ENCODE measurements at regions of chr12 and their contacts with region 1.

Region 1: GRCh38 chr12:751192-751998 is 984 bp upstream of the WNK1 start:
- DNase-seq: peak; percentile 96
- ATAC-seq: peak; percentile 57
- H3K4me3 Mint-ChIP-seq: no peak overlapping the region
- H3K27ac Mint-ChIP-seq: no peak overlapping the region
- H3K4me1 Mint-ChIP-seq: peaks cover 22% of the 10 kb centered on the region
- H3K27me3 Mint-ChIP-seq: no peaks in the 10 kb centered on the region
- CTCF ChIP-seq: peak; percentile 71

Region 2: GRCh38 chr12:541676-542324 is 209.6 kb before region 1 on chr12:
- CTCF ChIA-PET with region 1: no interaction called
- POLR2A ChIA-PET with region 1: no interaction called
- intact Hi-C with region 1: no loop called
- DNase-seq: no peak
- ATAC-seq: no peak
- H3K4me3 Mint-ChIP-seq: no peak overlapping the region
- H3K27ac Mint-ChIP-seq: no peak overlapping the region
- H3K4me1 Mint-ChIP-seq: peaks cover 20% of the 10 kb centered on the region
- H3K27me3 Mint-ChIP-seq: peaks cover 5% of the 10 kb centered on the region
- CTCF ChIP-seq: no peak

Region 3: DNA sequence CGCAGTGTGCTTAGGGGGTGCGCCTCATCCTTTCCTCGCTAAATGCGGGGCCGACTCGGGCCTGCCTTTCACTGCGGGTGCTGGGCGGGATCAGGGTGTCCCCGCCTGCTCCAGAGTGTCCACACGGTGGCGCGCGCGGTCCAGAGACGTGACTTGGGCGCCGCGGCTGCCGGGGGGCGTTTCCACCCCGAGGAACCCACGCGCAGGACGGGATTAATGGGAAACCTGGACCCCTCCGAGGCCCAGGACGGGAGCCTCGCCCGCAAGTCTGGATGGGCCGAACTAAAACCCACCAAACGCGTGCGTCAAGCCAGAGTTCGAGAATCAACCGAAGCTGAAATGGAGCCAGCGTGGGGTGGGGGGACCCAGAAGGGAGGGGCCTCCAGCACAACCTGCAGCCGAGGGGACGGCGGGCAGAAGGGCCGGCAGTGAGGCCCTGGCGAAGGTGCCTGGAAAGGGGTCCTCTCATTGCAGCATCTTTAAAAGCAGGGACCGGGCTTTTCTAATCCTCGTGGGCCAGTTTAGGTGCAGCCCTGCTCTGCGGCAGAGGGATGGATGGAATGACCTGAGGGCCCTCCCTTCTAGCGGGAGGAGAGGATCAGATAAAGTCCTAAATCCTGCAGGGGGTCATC is 181.5 kb before region 1 on chr12:
- CTCF ChIA-PET with region 1: interaction called, 61 read pairs
- POLR2A ChIA-PET with region 1: interaction called, 18 read pairs
- intact Hi-C with region 1: loop called (anchors 5 kb)
- DNase-seq: peak; percentile 92
- ATAC-seq: peak; percentile 92
- H3K4me3 Mint-ChIP-seq: peak overlapping the region; percentile 81
- H3K27ac Mint-ChIP-seq: peak overlapping the region; percentile 76
- H3K4me1 Mint-ChIP-seq: peaks cover 66% of the 10 kb centered on the region
- H3K27me3 Mint-ChIP-seq: no peaks in the 10 kb centered on the region
- CTCF ChIP-seq: peak; percentile 90

Region 4: GRCh38 chr12:630656-631632 is 120.5 kb before region 1 on chr12:
- CTCF ChIA-PET with region 1: interaction called, 12 read pairs
- POLR2A ChIA-PET with region 1: interaction called, 8 read pairs
- intact Hi-C with region 1: no loop called
- DNase-seq: peak; percentile 82
- ATAC-seq: peak; percentile 97
- H3K4me3 Mint-ChIP-seq: peak overlapping the region; percentile 86
- H3K27ac Mint-ChIP-seq: peak overlapping the region; percentile 93
- H3K4me1 Mint-ChIP-seq: peaks cover 28% of the 10 kb centered on the region
- H3K27me3 Mint-ChIP-seq: no peaks in the 10 kb centered on the region
- CTCF ChIP-seq: no peak

Region 5: DNA sequence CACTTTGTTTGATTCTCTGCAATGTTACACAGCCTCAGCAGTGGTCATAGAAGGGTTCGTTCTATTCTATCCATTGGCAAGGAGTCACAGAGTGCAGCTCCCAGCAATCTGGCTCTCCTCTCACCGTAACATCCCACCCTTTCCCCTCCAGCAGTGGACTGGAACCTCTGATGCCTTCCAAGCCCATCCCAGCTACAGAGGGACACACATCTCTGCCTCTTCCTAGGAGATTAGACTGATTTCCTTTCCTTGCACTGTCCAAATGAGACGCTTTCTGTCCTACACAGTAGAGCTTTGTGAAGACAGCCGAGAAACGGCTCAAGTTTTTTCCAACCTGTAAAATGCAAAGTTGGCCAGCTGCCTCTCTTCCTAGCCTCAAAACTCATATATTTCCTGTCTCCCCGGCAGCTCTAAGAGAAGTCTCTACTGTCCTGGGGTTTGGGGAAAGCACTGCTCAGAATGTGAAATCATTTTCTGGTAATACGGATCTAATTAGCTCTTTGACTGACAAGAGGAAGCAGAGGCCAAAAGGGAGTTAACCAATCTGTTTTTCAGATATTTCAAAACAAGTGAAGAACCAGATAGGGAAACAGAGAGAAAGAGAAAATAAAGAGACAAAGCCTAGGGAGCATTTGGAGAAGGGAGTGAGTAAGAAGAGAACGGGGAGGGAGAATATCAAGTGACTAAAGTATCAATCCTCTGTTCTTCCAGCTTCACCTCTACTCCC is 88.7 kb before region 1 on chr12:
- CTCF ChIA-PET with region 1: interaction called, 88 read pairs
- POLR2A ChIA-PET with region 1: interaction called, 54 read pairs
- intact Hi-C with region 1: no loop called
- DNase-seq: no peak
- ATAC-seq: no peak
- H3K4me3 Mint-ChIP-seq: peak overlapping the region; percentile 59
- H3K27ac Mint-ChIP-seq: peak overlapping the region; percentile 79
- H3K4me1 Mint-ChIP-seq: peaks cover 50% of the 10 kb centered on the region
- H3K27me3 Mint-ChIP-seq: no peaks in the 10 kb centered on the region
- CTCF ChIP-seq: no peak

Region 6: GRCh38 chr12:712172-712863 is 39.1 kb before region 1 on chr12:
- CTCF ChIA-PET with region 1: interaction called, 8 read pairs
- POLR2A ChIA-PET with region 1: interaction called, 15 read pairs
- intact Hi-C with region 1: loop called (anchors 5 kb)
- DNase-seq: no peak
- ATAC-seq: no peak
- H3K4me3 Mint-ChIP-seq: no peak overlapping the region
- H3K27ac Mint-ChIP-seq: peak overlapping the region; percentile 67
- H3K4me1 Mint-ChIP-seq: peaks cover 35% of the 10 kb centered on the region
- H3K27me3 Mint-ChIP-seq: no peaks in the 10 kb centered on the region
- CTCF ChIP-seq: no peak

Region 7: GRCh38 chr12:779745-780734 is 28.6 kb after region 1 on chr12:
- CTCF ChIA-PET with region 1: interaction called, 24 read pairs
- POLR2A ChIA-PET with region 1: interaction called, 5 read pairs
- intact Hi-C with region 1: no loop called
- DNase-seq: no peak
- ATAC-seq: peak; percentile 59
- H3K4me3 Mint-ChIP-seq: peak overlapping the region; percentile 63
- H3K27ac Mint-ChIP-seq: peak overlapping the region; percentile 52
- H3K4me1 Mint-ChIP-seq: peaks cover 71% of the 10 kb centered on the region
- H3K27me3 Mint-ChIP-seq: no peaks in the 10 kb centered on the region
- CTCF ChIP-seq: no peak

Region 8: GRCh38 chr12:818733-819132 is 67.3 kb after region 1 on chr12:
- CTCF ChIA-PET with region 1: interaction called, 107 read pairs
- POLR2A ChIA-PET with region 1: interaction called, 10 read pairs
- intact Hi-C with region 1: loop called (anchors 2 kb)
- DNase-seq: no peak
- ATAC-seq: no peak
- H3K4me3 Mint-ChIP-seq: no peak overlapping the region
- H3K27ac Mint-ChIP-seq: no peak overlapping the region
- H3K4me1 Mint-ChIP-seq: peaks cover 53% of the 10 kb centered on the region
- H3K27me3 Mint-ChIP-seq: no peaks in the 10 kb centered on the region
- CTCF ChIP-seq: no peak

Measured in activated CD8-positive, alpha-beta T cell treated with anti-CD3 and anti-CD28 coated beads for 36 hours (primary cell).